SK-N-SH (cell line): ENCODE measurements at regions of chr13 and their contacts with region 1.

Region 1: GRCh38 chr13:75870397-75870903 is 234.3 kb downstream of the LMO7 start:
- DNase-seq: peak; percentile 46
- H3K4me3 ChIP-seq: peak overlapping the region; percentile 38 to 48
- H3K27ac ChIP-seq: no peak overlapping the region
- H3K4me1 ChIP-seq: 0 out of 4 replicates have a peak, but pooled peaks cover 0 to 3% of the 10 kb centered on the region in 2 experiments
- H3K27me3 ChIP-seq: no peaks in the 10 kb centered on the region
- CTCF ChIP-seq: peak; percentile 85
- EP300 ChIP-seq: no peak
- RAD21 ChIP-seq: peak; percentile 73

Region 2: DNA sequence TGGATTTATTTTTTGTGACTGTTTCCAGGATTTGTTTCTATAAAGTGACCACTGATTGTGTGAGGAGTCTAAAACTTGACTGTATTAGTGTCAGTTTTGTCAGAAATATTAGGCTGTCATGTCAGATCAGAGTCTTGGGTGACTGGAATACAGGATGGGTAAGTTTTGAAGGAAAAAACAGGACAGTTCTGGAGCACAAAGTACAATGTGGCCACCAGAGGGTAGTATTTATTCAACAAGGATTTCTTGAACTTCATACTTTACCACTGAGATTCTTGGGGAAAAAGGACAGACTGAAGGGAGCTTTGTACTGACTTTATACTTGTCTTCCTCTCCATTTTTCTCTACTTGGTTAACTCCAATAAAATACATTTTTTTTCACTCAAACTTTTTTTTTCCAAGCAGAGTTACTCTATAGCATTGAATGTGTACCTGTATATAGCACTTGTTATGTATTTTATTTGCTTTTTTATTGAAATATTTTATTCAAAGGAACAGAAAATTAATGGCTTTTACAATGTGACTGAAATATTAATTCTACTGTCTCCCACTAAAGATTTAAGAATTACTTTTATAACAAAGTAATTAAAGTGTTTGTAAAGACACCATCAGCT is 183.2 kb before region 1 on chr13:
- CTCF ChIA-PET with region 1: interaction called, 16 read pairs
- POLR2A ChIA-PET with region 1: no interaction called
- DNase-seq: peak; percentile 10
- H3K4me3 ChIP-seq: no peak overlapping the region
- H3K27ac ChIP-seq: peak overlapping the region in 1 of 2 experiments; percentile 0; a peak in 1 of 4 replicates
- H3K4me1 ChIP-seq: peaks cover 0 to 13% of the 10 kb centered on the region in 2 experiments; a peak in 1 of 4 replicates
- H3K27me3 ChIP-seq: no peaks in the 10 kb centered on the region
- CTCF ChIP-seq: peak; percentile 72
- EP300 ChIP-seq: no peak
- RAD21 ChIP-seq: peak; percentile 65

Region 3: GRCh38 chr13:76016799-76017400 is 146.4 kb after region 1 on chr13:
- CTCF ChIA-PET with region 1: interaction called, 54 read pairs
- POLR2A ChIA-PET with region 1: no interaction called
- DNase-seq: peak; percentile 17
- H3K4me3 ChIP-seq: no peak overlapping the region; a peak in 1 of 4 replicates
- H3K27ac ChIP-seq: no peak overlapping the region
- H3K4me1 ChIP-seq: peaks cover 0 to 2% of the 10 kb centered on the region in 2 experiments; a peak in 2 of 4 replicates
- H3K27me3 ChIP-seq: no peaks in the 10 kb centered on the region; the same call in 1 of the 2 replicates
- CTCF ChIP-seq: peak; percentile 68
- EP300 ChIP-seq: no peak
- RAD21 ChIP-seq: peak; percentile 63

Region 4: DNA sequence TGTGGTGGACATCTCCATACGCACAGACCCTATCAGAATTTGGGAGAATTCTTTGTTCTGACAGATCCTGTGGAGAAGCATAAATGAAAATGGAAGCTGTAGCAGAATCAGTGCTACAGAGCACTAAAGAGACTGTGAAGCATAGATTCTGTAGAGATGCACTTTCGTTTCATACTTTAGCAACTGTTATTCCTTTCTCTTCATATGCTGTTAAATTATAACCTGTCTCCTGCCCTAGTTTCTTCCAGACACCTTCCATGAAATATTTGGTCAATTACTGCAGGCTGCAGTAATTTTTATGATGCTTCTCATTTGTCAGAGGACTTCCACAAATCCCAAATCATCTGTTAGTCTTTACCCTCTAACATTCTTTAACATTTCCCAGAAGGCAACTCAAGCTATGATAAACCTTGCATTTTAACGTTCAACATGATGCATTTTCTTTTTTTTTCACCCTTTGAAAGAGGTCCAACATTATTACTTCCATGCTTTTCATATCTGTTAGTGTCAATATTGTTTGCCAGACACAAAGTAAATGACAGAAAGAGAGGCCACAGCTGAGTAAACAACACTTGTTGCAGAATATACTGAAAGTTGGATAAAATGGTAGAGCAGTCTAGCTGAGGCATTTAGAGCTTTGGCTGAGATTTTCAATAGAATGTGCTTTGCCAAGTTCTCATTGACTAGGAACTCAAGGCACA is 178.4 kb after region 1 on chr13:
- CTCF ChIA-PET with region 1: no interaction called
- POLR2A ChIA-PET with region 1: no interaction called
- DNase-seq: no peak
- H3K4me3 ChIP-seq: no peak overlapping the region
- H3K27ac ChIP-seq: no peak overlapping the region
- H3K4me1 ChIP-seq: no peaks in the 10 kb centered on the region
- H3K27me3 ChIP-seq: no peaks in the 10 kb centered on the region
- CTCF ChIP-seq: no peak
- EP300 ChIP-seq: no peak
- RAD21 ChIP-seq: no peak

Region 5: GRCh38 chr13:76473552-76474134 is 603.2 kb after region 1 on chr13:
- CTCF ChIA-PET with region 1: interaction called, 21 read pairs
- POLR2A ChIA-PET with region 1: no interaction called
- DNase-seq: peak; percentile 53
- H3K4me3 ChIP-seq: no peak overlapping the region; a peak in 1 of 4 replicates
- H3K27ac ChIP-seq: no peak overlapping the region
- H3K4me1 ChIP-seq: no peaks in the 10 kb centered on the region
- H3K27me3 ChIP-seq: peaks cover 10% of the 10 kb centered on the region; the same call in 1 of the 2 replicates
- CTCF ChIP-seq: peak; percentile 87
- EP300 ChIP-seq: no peak
- RAD21 ChIP-seq: peak; percentile 89